ENCODE measurements at regions of chr1 and their contacts with region 1.

Region 1: GRCh38 chr1:100810360-100810759 is 84.3 kb downstream of the EXTL2 start:
- DNase-seq: no peak
- H3K4me3 ChIP-seq: no peak overlapping the region
- H3K27ac ChIP-seq: no peak overlapping the region
- H3K4me1 ChIP-seq: no peaks in the 10 kb centered on the region
- H3K27me3 ChIP-seq: no peaks in the 10 kb centered on the region
- CTCF ChIP-seq: no peak

Region 2: DNA sequence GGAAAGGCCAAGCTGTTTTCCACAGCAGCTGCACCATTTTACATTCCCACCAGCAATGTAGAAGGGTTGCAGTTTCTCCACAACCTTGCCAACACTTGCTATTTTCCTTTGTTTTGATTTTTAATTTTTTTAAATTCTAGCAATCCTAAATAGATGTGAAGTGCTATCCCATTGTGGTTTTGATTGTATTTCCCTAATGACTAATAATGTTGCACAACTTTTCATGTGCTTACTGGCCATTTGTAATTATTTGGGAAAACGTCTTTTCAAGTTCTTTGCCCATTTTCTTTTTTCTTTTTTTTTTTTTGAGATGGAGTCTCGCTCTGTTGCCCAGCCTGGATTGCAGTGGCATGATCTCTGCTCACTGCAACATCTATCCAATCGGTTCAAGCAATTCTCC is 36.9 kb before region 1 on chr1:
- CTCF ChIA-PET with region 1: no interaction called
- POLR2A ChIA-PET with region 1: no interaction called
- intact Hi-C with region 1: no loop called
- DNase-seq: no peak
- H3K4me3 ChIP-seq: no peak overlapping the region
- H3K27ac ChIP-seq: no peak overlapping the region
- H3K4me1 ChIP-seq: no peaks in the 10 kb centered on the region
- H3K27me3 ChIP-seq: no peaks in the 10 kb centered on the region
- CTCF ChIP-seq: no peak

Region 3: GRCh38 chr1:100832682-100833469 is 22.5 kb after region 1 on chr1:
- CTCF ChIA-PET with region 1: no interaction called
- POLR2A ChIA-PET with region 1: no interaction called
- intact Hi-C with region 1: loop called (anchors 2 kb)
- DNase-seq: no peak
- H3K4me3 ChIP-seq: no peak overlapping the region
- H3K27ac ChIP-seq: no peak overlapping the region
- H3K4me1 ChIP-seq: no peaks in the 10 kb centered on the region
- H3K27me3 ChIP-seq: no peaks in the 10 kb centered on the region
- CTCF ChIP-seq: no peak

Region 4: DNA sequence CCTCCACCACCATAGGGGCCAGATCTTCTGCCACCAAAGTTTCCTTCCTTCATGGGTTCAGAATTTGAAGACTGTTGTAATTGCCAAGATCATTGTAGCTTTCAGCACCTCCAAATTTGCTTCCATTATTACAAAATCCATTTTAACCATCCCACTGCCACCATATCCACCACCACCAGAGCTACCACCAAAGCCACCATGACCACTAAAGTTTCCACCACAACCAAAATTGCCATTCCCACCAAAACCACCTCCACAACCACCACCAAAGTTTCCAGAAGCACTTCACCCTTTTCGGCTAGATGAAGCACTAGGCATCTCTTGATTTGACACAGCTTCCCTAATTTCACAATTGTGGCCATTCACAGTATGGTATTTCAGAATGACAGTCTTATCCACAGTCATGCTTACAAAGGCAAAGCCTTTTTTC is 130.8 kb after region 1 on chr1:
- CTCF ChIA-PET with region 1: no interaction called
- POLR2A ChIA-PET with region 1: no interaction called
- intact Hi-C with region 1: no loop called
- DNase-seq: no peak
- H3K4me3 ChIP-seq: no peak overlapping the region
- H3K27ac ChIP-seq: no peak overlapping the region
- H3K4me1 ChIP-seq: no peaks in the 10 kb centered on the region
- H3K27me3 ChIP-seq: no peaks in the 10 kb centered on the region
- CTCF ChIP-seq: no peak